Activated CD4-positive, alpha-beta T cell treated with anti-CD3 and anti-CD28 coated beads for 36 hours (primary cell): ENCODE measurements at regions of chr15 and their contacts with region 1.

Region 1: GRCh38 chr15:31488426-31489204 is 162.0 kb downstream of the KLF13 start:
- DNase-seq: peak; percentile 59
- ATAC-seq: peak; percentile 42
- H3K4me3 Mint-ChIP-seq: peak overlapping the region; percentile 21
- H3K27ac Mint-ChIP-seq: peak overlapping the region; percentile 79
- H3K4me1 Mint-ChIP-seq: peaks cover 55% of the 10 kb centered on the region
- H3K27me3 Mint-ChIP-seq: peaks cover 3% of the 10 kb centered on the region

Region 2: GRCh38 chr15:31136016-31136415 is 352.6 kb before region 1 on chr15:
- CTCF ChIA-PET with region 1: no interaction called
- POLR2A ChIA-PET with region 1: no interaction called
- intact Hi-C with region 1: loop called in 1 of 2 experiments (anchors 10 kb)
- DNase-seq: no peak
- ATAC-seq: no peak
- H3K4me3 Mint-ChIP-seq: no peak overlapping the region
- H3K27ac Mint-ChIP-seq: no peak overlapping the region
- H3K4me1 Mint-ChIP-seq: no peaks in the 10 kb centered on the region
- H3K27me3 Mint-ChIP-seq: no peaks in the 10 kb centered on the region

Region 3: DNA sequence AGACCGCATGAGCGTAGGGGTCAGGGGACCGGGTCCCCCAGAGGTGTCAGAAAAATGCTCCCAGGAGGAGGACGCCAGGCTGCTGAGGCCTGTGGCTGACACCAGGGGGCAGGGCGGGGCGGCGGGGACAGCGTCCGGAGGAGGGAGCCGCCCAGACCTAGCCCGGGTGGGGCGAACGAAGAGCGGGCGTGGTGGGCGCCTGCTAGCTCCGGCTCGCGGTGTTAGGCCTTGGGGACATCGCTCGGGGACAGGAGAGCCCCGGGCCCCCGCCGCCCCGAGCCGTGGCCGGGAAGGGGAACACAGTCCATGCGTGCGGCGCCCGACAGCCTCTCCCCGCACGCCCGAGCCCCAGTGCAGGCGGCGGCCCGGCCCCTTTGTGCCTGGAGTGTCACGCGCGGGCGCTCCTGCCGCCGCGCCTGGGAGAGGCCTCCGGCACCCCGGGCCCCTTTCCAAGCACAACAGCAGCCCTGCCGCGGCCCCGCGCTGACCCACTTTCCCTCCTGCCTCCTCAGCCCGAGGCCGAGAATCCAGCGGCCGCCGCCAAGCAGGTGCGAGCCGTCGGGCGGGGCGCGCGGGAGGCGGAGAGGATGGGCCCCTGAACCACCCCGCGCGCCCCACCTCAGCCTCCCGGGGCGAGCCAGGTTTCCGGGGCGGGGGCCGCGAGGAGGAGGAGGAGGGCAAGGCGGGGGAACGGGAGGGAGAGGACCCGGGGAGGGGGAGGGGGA is 273.0 kb before region 1 on chr15:
- CTCF ChIA-PET with region 1: interaction called, 41 read pairs
- POLR2A ChIA-PET with region 1: no interaction called
- intact Hi-C with region 1: loop called (anchors 1 to 2 kb)
- DNase-seq: peak; percentile 93
- ATAC-seq: peak; percentile 89
- H3K4me3 Mint-ChIP-seq: peak overlapping the region; percentile 72
- H3K27ac Mint-ChIP-seq: peak overlapping the region; percentile 56
- H3K4me1 Mint-ChIP-seq: peaks cover 17% of the 10 kb centered on the region
- H3K27me3 Mint-ChIP-seq: no peaks in the 10 kb centered on the region

Region 4: GRCh38 chr15:31344823-31345605 is 143.6 kb before region 1 on chr15:
- CTCF ChIA-PET with region 1: interaction called, 6 read pairs
- POLR2A ChIA-PET with region 1: no interaction called
- intact Hi-C with region 1: loop called (anchors 5 kb)
- DNase-seq: peak; percentile 65
- ATAC-seq: peak; percentile 12
- H3K4me3 Mint-ChIP-seq: peak overlapping the region; percentile 87
- H3K27ac Mint-ChIP-seq: peak overlapping the region; percentile 97
- H3K4me1 Mint-ChIP-seq: peaks cover 97% of the 10 kb centered on the region
- H3K27me3 Mint-ChIP-seq: no peaks in the 10 kb centered on the region

Region 5: DNA sequence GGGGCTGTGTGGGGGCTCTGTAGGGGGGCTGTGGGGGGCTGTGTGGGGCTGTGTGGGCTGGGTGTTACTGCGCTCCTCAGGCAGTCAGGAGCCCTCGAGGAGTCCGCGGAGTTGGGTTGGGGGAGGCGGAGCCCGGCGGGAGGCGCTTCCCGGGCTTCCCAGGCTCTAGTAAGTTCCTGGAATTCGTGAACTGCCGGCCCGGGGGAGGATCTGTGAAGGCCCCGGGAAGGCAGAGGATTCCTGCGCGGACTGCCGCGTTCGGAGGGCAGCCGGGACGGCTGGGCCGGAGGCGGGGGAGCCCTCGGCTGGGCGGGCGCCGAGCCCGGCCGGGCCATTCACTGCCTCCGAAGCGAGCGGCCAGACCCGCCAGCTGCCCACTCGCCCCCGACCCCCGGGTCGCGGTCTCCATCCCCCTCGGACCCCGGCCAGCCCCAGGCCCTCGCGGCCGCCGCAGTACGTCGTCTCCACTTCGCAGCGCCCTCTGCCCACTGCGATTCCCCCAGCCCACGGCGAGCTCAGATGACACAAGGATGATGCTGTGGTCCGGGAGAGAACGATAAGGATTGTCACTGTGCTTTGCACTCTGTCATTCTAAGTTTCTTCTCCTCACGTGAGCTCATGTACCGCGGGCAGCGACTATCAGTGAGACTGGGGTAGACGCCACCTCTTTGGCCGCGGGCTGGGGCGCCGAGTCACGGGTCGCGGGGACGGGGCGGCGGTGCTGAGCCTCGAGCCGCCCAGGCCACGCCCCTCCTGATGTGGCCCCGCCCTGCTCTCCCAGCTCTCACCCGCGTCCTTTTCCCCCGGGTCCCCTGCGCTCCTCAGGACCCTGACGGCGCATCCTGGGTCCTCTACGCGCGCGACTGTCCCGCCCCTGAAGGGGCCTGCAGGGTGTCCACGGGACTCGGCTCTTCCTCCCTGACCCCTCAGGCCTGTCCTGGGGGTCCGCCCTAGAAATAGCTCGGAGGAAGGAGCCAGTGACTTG is 96.6 kb before region 1 on chr15:
- CTCF ChIA-PET with region 1: interaction called, 9 read pairs
- POLR2A ChIA-PET with region 1: no interaction called
- intact Hi-C with region 1: loop called (anchors 2 to 10 kb)
- DNase-seq: peak; percentile 90
- ATAC-seq: peak; percentile 92
- H3K4me3 Mint-ChIP-seq: peak overlapping the region; percentile 80
- H3K27ac Mint-ChIP-seq: peak overlapping the region; percentile 71
- H3K4me1 Mint-ChIP-seq: peaks cover 40% of the 10 kb centered on the region
- H3K27me3 Mint-ChIP-seq: no peaks in the 10 kb centered on the region

Region 6: GRCh38 chr15:31448635-31448979 is 40.0 kb before region 1 on chr15:
- CTCF ChIA-PET with region 1: interaction called, 10 read pairs
- POLR2A ChIA-PET with region 1: no interaction called
- intact Hi-C with region 1: no loop called
- DNase-seq: no peak
- ATAC-seq: no peak
- H3K4me3 Mint-ChIP-seq: no peak overlapping the region
- H3K27ac Mint-ChIP-seq: peak overlapping the region; percentile 23
- H3K4me1 Mint-ChIP-seq: peaks cover 21% of the 10 kb centered on the region
- H3K27me3 Mint-ChIP-seq: peaks cover 2% of the 10 kb centered on the region

Region 7: DNA sequence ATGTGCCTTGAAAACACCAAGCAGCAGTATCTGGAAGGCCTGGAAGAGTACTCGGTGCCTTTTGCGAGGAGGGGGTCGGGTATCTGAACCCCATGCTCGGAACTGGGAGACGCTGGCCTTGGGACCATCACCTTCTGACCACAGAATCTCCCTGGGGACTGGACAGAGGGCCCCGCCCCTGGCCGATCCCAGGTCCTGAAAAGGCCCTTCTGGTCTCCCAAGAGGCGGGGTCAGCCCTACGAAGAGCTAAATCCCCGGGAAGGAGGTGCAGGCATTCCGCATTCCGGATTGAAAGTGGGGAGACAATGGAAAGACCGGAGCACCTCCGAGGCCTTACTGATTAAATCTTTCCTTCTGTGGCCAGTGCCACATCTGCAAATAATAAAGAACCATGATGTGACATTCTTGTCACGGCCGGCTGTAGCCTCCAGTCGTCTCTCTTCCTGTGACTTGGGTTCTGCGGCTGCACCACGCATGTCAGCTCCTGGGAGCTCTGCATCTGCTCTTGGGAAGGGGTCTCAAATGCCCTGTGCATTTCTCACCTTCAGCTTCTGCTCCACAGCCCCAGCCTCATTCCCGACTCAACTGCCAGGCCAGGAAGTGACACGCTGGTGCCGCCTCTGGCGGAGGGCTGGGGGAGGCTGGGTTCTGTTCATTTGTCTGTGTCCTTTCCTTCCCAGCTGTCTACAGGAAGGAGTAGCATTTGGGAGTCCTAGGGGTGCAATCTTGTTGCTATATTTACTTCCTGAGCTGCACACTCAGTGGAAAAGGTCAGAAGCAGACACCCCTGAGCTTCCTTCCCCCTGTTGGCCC is 11.5 kb after region 1 on chr15:
- CTCF ChIA-PET with region 1: interaction called, 10 read pairs
- POLR2A ChIA-PET with region 1: no interaction called
- intact Hi-C with region 1: no loop called
- DNase-seq: no peak
- ATAC-seq: no peak
- H3K4me3 Mint-ChIP-seq: no peak overlapping the region
- H3K27ac Mint-ChIP-seq: no peak overlapping the region
- H3K4me1 Mint-ChIP-seq: no peaks in the 10 kb centered on the region
- H3K27me3 Mint-ChIP-seq: no peaks in the 10 kb centered on the region